Activated CD8-positive, alpha-beta T cell treated with anti-CD3 and anti-CD28 coated beads, Interleukin-2, amount 10 ng/mL, durations not matched to agents 7 days and 5 days (primary cell): ENCODE measurements at regions of chr18 and their contacts with region 1.

Region 1: GRCh38 chr18:74353169-74353775 is 37.6 kb downstream of the C18orf63 start:
- DNase-seq: peak; percentile 78
- ATAC-seq: peak; percentile 90
- H3K4me3 Mint-ChIP-seq: no peak overlapping the region
- H3K27ac Mint-ChIP-seq: no peak overlapping the region
- H3K4me1 Mint-ChIP-seq: peaks cover 41% of the 10 kb centered on the region
- H3K27me3 Mint-ChIP-seq: peaks cover 4% of the 10 kb centered on the region

Region 2: DNA sequence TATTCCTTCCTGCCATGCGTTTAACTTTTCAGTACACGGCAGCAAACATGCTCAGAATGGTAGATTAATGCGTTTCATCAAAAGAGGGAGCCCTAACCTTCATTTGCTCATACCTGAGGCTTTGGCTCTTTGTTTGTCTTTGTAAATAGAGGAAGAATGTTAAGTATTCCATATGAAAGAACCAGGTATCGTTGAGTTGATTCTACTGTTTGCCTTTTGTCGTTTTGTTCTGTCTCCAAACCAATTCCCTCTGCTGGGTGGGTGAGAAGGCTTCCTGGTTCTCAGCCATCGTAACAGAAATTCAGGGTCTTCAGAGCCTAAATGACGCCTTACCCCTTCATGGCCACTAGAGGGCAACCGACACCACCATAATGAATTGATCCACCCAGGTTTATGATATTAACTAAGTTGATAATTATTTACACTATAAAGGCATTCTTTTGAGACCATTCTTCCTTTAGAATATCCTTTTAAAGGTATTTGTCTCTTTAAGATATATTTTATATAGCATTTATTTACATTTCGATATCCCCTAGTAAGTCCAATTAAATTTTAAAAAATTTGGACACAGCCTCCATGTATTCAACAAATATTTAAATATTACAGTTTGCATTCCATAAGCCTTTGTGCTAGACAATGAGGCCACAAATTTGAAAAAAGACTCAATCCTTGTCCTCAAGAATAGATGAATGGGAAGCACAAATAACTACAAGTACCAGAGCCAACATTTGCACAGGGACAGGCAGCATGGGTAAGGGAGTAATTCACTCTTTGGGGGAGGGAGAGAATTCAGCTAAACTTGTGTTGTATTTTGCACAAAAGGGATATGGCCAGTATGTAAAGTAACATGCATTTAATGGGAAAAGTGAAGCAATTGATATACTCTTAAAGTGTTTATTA is 156.8 kb before region 1 on chr18:
- CTCF ChIA-PET with region 1: interaction called, 12 read pairs
- POLR2A ChIA-PET with region 1: no interaction called
- DNase-seq: peak; percentile 67
- ATAC-seq: peak; percentile 92
- H3K4me3 Mint-ChIP-seq: peak overlapping the region; percentile 53
- H3K27ac Mint-ChIP-seq: no peak overlapping the region
- H3K4me1 Mint-ChIP-seq: peaks cover 6% of the 10 kb centered on the region
- H3K27me3 Mint-ChIP-seq: peaks cover 11% of the 10 kb centered on the region

Region 3: DNA sequence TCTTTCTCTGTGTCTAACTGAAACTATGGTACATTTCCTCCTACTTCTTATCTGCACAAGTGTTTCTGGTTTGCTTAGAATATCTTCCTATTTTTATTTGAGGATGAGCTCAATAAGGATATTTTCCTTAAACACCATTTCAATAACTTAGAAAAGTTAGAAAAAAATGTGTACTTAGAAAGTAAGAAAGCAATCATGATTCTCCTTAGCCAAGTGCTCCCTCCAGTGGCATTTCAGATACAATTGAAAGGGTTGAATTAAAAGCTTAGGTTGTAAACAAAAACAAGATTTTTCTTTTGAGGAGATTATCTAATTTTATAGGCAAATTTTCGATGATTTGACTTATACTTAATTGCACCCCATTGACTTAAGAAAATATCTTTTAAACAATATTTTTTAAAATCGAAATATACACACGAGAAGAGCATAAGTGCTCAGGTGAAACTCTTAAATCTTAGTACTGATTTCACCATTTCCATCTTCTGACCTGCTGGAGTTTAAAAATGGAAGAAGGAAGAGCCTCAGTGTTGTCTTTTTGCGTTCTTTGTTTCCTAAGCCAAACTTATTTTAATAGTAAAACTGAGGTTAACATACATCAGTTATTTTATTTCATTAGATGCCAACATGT is 10.7 kb before region 1 on chr18:
- CTCF ChIA-PET with region 1: interaction called, 27 read pairs
- POLR2A ChIA-PET with region 1: no interaction called
- DNase-seq: peak; percentile 58
- ATAC-seq: no peak
- H3K4me3 Mint-ChIP-seq: no peak overlapping the region
- H3K27ac Mint-ChIP-seq: no peak overlapping the region
- H3K4me1 Mint-ChIP-seq: no peaks in the 10 kb centered on the region
- H3K27me3 Mint-ChIP-seq: peaks cover 27% of the 10 kb centered on the region

Region 4: GRCh38 chr18:74370115-74370514 is 16.8 kb after region 1 on chr18:
- CTCF ChIA-PET with region 1: interaction called, 58 read pairs
- POLR2A ChIA-PET with region 1: interaction called, 3 read pairs
- DNase-seq: peak; percentile 21
- ATAC-seq: no peak
- H3K4me3 Mint-ChIP-seq: no peak overlapping the region
- H3K27ac Mint-ChIP-seq: no peak overlapping the region
- H3K4me1 Mint-ChIP-seq: peaks cover 54% of the 10 kb centered on the region
- H3K27me3 Mint-ChIP-seq: peaks cover 10% of the 10 kb centered on the region

Region 5: DNA sequence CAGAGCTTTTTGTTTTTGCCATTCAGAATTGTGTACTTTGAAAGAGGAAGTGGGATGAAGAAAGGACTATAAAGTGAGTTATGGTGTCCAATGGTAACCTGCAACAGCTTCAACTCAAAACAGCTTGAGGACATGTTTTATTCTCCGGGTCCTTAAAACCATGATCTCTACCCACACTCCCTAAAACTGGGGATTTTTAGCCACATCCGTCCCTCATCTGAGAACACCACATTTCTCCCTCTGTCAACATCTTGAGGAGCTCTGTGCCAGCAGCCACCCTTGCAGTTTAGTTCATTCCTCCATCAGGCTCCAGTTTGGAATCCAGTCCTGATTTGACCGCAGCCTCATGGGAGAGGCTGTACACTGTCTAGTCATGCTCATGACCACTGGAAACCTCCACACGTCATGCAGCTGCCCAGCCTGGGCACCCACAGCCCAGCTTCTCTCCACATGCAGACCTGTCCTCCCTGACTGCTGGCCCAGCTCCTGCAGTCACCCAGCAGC is 25.0 kb after region 1 on chr18:
- CTCF ChIA-PET with region 1: interaction called, 58 read pairs
- POLR2A ChIA-PET with region 1: interaction called, 3 read pairs
- DNase-seq: peak; percentile 69
- ATAC-seq: peak; percentile 51
- H3K4me3 Mint-ChIP-seq: peak overlapping the region; percentile 54
- H3K27ac Mint-ChIP-seq: peak overlapping the region; percentile 89
- H3K4me1 Mint-ChIP-seq: peaks cover 61% of the 10 kb centered on the region
- H3K27me3 Mint-ChIP-seq: no peaks in the 10 kb centered on the region

Region 6: DNA sequence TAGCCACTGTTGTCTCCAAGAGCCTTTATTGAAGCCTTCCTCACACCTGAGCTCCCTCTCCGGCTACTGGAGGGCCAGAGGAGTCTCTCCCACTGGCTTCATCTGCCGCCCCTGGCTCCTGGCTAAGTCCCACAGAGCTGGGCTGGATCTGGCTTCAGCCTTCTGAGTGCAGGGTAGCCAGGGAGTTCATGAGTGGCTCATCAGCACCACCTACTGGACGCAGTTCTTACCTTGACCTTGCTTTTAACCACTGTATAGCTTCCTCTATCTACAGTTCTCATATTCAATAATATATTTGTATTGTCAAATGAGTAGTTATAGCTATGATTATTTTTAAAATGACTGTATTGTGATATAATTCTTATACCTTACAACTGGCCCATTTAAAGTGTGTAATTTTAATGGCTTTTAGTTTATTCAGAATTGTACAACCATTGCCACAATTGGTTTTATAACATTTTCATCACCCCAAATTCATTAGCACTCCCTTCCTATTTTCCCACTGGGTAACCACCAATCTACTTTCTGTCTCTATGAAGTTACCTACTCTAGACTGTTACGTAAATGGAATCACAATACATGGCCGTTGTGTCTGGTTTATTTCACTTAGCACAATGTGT is 198.8 kb after region 1 on chr18:
- CTCF ChIA-PET with region 1: interaction called, 28 read pairs
- POLR2A ChIA-PET with region 1: no interaction called
- DNase-seq: peak; percentile 87
- ATAC-seq: peak; percentile 98
- H3K4me3 Mint-ChIP-seq: no peak overlapping the region
- H3K27ac Mint-ChIP-seq: no peak overlapping the region
- H3K4me1 Mint-ChIP-seq: peaks cover 5% of the 10 kb centered on the region
- H3K27me3 Mint-ChIP-seq: peaks cover 4% of the 10 kb centered on the region